ENCODE measurements at regions of chr19 and their contacts with region 1.

Region 1: DNA sequence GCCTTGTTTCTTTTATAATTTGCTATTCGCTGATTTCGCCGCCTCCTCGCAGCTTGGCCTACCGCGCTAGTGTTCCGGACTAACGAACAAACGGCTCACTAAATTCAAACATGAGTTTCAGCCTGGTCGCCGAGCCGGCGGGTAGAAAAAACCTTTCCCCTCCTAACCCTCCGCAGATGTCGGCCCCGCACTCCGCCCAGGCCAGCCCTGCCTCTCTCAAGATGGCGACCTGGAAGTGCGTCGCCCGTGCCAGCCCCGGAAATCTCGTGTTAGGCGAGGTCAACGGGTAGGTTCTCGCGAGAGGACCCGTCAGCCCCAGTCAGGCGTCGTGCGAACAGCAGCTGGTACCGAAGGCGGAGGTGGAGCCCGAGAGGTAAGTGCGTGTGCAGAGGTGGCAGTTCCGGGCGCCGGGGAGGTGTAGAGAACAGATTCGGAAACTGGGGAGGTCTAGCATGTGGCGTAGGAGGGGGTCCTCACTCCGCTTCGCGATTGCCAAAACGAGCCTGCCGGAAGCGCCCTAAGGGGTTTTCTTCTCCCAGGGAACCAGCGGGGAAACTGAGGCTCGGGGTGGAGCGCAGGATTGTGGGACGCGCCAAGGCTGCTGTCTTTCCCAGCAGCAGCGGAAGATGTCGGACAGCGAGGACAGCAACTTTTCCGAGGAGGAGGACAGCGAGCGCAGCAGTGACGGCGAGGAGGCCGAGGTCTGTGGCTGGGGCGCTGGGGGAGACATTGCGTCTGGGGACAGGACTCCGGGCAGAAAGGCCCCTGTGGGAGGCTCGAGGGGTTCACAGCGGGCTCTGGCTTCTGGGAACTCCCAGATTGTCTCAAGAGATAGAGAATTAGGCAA is at the start of gene SUPT5H:
- DNase-seq: peak; percentile 95
- H3K4me3 ChIP-seq: peak within 1 kb of the TSS; percentile 99
- H3K27ac ChIP-seq: peak within 1 kb of the TSS; percentile 94
- H3K27me3 ChIP-seq: no peaks in the 10 kb centered on the region
- CTCF ChIP-seq: no peak
- polyA plus RNA-seq, gene SUPT5H: 75.3 and 78.0 TPM in 2 replicates

Region 2: DNA sequence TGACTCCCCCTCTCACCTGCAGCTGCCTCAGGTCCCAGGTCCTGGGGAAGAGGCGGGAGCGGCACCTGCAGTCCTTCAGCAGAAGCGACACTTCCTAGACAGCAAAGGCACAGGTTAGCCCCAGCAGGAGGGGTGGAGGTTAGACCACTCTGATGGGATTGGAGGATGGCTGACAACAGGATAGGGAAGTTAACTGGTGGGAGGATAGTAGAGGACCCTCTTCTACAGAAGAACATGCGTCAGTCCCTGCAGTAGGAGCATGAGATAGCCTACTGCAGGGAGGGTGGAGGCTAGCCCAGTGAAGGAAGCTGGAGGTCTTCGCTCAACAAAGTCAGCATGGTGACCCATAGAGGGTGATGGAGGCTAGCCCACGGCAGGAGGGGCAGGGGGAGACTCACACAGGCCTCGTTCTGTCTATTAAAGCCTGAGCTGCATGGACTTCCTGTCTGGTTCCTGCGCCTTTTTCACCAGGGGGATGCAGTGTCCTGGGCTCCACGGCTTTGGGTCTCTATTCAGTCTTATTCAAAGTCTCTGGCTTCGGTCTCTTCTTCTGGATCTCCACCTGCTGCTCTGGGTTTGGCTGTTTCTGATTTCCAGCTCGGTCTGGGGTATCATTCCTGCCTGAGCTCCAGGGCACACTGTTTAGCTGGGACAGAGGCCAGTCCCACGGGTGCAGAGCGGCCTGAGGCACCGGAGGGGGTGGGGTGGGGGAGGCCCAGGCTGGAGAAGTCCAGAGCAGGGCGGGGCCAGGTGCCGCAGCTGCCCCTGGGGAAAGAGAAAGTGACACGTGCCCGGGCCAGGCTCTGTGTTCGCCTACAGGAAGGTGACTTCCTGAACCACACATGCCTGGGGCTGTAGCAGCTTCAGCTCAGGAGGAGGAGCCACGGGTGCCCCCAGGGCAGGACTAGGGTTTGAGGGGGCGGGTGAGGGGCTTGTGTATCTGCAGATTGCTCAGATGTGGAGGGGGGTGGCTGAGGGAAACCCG is 208.0 kb before region 1 on chr19:
- CTCF ChIA-PET with region 1: no interaction called
- POLR2A ChIA-PET with region 1: no interaction called
- DNase-seq: no peak
- H3K4me3 ChIP-seq: no peak overlapping the region
- H3K27ac ChIP-seq: no peak overlapping the region
- H3K27me3 ChIP-seq: peaks cover 23% of the 10 kb centered on the region
- CTCF ChIP-seq: no peak

Region 3: DNA sequence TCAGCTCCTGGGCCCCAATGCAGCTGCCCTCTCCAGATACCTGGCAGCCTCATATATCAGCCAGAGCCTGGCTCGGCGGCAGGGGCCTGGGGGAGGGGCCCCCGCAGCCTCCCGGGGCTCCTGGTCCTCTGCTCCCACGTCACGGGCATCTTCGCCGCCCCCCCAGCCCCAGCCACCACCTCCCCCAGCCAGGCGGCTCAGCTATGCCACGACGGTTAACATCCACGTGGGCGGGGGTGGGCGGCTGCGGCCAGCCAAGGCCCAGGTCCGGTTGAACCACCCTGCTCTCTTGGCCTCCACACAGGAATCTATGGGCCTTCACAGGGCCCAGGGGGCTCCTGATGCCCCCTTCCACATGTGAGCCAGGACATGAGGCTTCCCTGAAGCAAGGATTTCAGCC is 20.6 kb before region 1 on chr19:
- CTCF ChIA-PET with region 1: no interaction called
- POLR2A ChIA-PET with region 1: no interaction called
- DNase-seq: no peak
- H3K4me3 ChIP-seq: no peak overlapping the region
- H3K27ac ChIP-seq: no peak overlapping the region
- H3K27me3 ChIP-seq: no peaks in the 10 kb centered on the region
- CTCF ChIP-seq: no peak

Region 4: DNA sequence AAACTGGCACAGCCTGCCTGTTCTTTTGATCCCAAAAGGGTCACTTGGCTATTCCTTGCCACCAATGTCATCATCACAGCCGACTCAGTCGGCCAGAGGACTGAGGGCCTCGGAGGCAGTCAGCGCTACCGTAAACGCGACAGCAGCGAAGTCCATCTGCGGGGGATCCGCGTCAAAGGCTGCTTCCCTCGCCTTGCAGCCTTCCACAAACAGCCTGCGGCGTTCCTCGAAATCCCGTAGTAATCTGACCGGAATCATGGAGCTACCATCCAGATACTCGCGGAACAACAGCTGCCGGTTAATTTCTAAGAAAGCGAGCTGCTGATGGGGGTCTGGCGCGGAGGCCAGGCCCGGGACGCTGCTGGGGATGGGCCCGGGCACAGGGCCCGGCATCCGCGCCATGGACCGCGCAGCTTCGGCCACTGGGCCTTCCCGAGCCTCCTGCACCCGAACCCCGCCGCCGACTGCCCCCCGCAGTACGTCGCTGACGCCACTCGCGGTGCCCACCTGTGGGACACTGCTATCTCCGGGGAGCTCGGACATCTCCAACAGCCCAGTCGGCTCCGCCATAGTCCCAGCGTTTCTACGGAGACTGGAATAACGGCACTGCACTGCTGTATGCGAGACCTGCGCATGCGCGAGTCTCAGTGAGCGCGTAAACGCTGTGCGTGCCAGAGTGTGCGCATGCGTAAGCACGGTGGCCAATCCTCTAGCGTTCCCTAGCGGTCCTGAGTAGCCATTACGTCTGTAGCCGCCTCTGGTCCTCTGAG is 86.9 kb after region 1 on chr19 and contains the start of gene EID2B:
- CTCF ChIA-PET with region 1: interaction called, 32 read pairs
- POLR2A ChIA-PET with region 1: interaction called, 3 read pairs
- DNase-seq: peak; percentile 95
- H3K4me3 ChIP-seq: peak within 1 kb of the TSS; percentile 95
- H3K27ac ChIP-seq: peak within 1 kb of the TSS; percentile 52
- H3K27me3 ChIP-seq: no peaks in the 10 kb centered on the region
- CTCF ChIP-seq: peak; percentile 98
- polyA plus RNA-seq, gene EID2B: 2.3 and 3.1 TPM in 2 replicates